CD14-positive monocyte (primary cell): ENCODE measurements at regions of chr22 and their contacts with region 1.

Region 1: GRCh38 chr22:19909350-19910179 is 32.0 kb upstream of the COMT start:
- DNase-seq: peak; percentile 60 to 69 (median 63)
- H3K4me3 ChIP-seq: no peak overlapping the region
- H3K4me3 Mint-ChIP-seq: no peak overlapping the region
- H3K27ac ChIP-seq: peak overlapping the region in 1 of 2 donors; percentile 15
- H3K27ac Mint-ChIP-seq: peak overlapping the region in 3 of 7 donors; percentile 48 to 68 (median 67)
- H3K4me1 ChIP-seq: no peaks in the 10 kb centered on the region
- H3K4me1 Mint-ChIP-seq: peaks cover 4% of the 10 kb centered on the region
- H3K27me3 ChIP-seq: no peaks in the 10 kb centered on the region
- H3K27me3 Mint-ChIP-seq: peaks cover 0 to 5% (median 0%) of the 10 kb centered on the region in 3 donors
- CTCF ChIP-seq: peak; percentile 77

Region 2: DNA sequence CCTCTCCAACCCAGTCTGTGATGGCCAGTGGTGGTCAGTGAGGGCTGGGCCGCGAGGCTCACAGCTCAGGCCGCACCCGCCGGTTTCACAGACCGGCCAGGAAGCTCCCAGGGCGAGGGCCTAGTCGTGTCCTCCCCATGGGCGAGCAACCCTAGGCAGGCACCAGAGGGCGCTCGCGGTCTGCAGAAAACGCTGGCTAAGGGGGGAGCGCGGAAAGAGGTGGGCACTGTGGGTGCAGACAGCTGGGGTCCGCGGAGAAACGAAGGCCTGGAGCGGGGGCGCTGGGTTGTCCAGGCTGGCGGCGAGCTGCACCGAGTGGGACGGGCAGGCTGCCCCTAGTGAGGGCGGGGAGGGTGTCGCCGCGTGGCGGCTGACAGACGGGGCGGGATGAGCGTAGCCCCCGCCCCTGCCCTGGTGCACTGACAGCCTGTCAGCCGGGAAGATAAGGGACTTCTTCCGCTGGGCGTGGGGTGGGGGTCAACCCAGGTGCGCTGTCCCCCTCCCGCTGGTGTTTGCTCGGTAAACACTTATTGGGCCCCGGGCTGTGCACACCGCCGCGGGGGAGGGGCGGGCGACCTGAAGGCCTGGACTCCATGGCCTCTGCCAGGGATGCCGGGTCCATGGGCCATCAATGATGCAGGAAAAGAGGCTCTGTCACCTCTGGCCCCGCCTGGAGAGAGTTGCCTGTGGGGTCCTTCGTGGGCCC is 178.8 kb before region 1 on chr22:
- intact Hi-C with region 1: loop called (anchors 1 to 2 kb)
- DNase-seq: peak; percentile 63 to 68 (median 67)
- H3K4me3 ChIP-seq: peak overlapping the region in 1 of 3 experiments; percentile 67
- H3K4me3 Mint-ChIP-seq: peak overlapping the region; percentile 62 to 90
- H3K27ac ChIP-seq: no peak overlapping the region
- H3K27ac Mint-ChIP-seq: no peak overlapping the region
- H3K4me1 ChIP-seq: peaks cover 7 to 8% of the 10 kb centered on the region in 2 donors
- H3K4me1 Mint-ChIP-seq: peaks cover 4% of the 10 kb centered on the region
- H3K27me3 ChIP-seq: peaks cover 0 to 10% of the 10 kb centered on the region in 2 donors
- H3K27me3 Mint-ChIP-seq: peaks cover 12 to 54% (median 19%) of the 10 kb centered on the region in 3 donors
- CTCF ChIP-seq: peak; percentile 95